ENCODE measurements at regions of chr2 and their contacts with region 1.

Region 1: GRCh38 chr2:62774555-62775366 is 69.2 kb downstream of the EHBP1 start:
- DNase-seq: peak in 2 of 4 donors; percentile 39 to 59
- ATAC-seq: peak; percentile 95
- H3K4me3 ChIP-seq: no peak overlapping the region
- H3K27ac ChIP-seq: no peak overlapping the region
- H3K4me1 ChIP-seq: no peaks in the 10 kb centered on the region
- H3K27me3 ChIP-seq: no peaks in the 10 kb centered on the region
- CTCF ChIP-seq: peak; percentile 52 to 68

Region 2: DNA sequence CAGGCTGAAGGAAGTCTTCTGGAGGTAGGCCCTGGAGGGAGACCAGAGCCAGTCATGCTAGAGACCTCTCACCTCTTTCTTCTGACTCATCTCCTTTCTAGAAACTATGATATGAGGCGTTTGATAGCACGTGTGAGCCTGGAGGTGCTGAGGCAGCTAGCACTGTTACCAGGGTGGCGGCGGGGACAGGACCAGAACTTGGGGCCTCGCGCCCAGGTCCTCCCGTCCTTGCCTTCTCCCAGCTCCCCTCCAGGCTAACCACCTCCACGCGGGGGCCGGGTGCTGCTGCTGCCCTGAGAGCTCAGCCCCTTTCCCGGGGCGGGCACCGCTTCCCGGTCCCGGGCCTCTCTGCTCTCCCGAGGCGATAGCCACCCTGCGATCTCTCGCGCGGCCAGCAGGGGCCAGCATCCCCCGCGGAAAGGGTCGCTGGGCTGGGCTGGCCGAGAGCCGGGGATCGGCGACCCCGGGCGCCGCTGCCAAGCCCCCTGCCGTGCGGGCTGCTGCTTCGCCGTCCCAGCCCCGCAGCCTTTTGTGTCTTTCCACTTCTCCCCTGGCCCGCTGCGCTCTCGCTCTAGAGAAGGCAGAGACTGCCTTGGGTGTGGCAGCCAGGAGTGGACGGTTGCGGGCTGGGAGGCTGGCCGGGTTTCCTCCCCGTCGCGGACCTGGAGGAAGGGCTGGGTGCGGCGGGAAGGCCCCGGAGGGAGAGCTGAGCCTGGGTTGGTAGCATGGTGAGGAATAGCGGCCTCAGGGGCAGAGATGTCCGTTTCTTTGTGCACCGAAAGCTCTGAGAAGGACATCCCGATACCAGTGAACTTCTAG is 317.8 kb before region 1 on chr2:
- intact Hi-C with region 1: loop called in 1 of 2 experiments (anchors 2 kb)
- DNase-seq: peak; percentile 63 to 94 (median 68)
- ATAC-seq: peak; percentile 99
- H3K4me3 ChIP-seq: peak overlapping the region; percentile 46 to 48
- H3K27ac ChIP-seq: peak overlapping the region in 1 of 2 donors; percentile 72
- H3K4me1 ChIP-seq: peaks cover 0 to 11% of the 10 kb centered on the region in 2 donors
- H3K27me3 ChIP-seq: no peaks in the 10 kb centered on the region
- CTCF ChIP-seq: peak; percentile 94 to 96

Region 3: GRCh38 chr2:63643486-63643885 is 868.7 kb after region 1 on chr2:
- intact Hi-C with region 1: no loop called
- DNase-seq: no peak
- ATAC-seq: no peak
- H3K4me3 ChIP-seq: no peak overlapping the region
- H3K27ac ChIP-seq: no peak overlapping the region
- H3K4me1 ChIP-seq: no peaks in the 10 kb centered on the region
- H3K27me3 ChIP-seq: no peaks in the 10 kb centered on the region
- CTCF ChIP-seq: no peak